ENCODE measurements at regions of chr20 and their contacts with region 1.

Region 1: DNA sequence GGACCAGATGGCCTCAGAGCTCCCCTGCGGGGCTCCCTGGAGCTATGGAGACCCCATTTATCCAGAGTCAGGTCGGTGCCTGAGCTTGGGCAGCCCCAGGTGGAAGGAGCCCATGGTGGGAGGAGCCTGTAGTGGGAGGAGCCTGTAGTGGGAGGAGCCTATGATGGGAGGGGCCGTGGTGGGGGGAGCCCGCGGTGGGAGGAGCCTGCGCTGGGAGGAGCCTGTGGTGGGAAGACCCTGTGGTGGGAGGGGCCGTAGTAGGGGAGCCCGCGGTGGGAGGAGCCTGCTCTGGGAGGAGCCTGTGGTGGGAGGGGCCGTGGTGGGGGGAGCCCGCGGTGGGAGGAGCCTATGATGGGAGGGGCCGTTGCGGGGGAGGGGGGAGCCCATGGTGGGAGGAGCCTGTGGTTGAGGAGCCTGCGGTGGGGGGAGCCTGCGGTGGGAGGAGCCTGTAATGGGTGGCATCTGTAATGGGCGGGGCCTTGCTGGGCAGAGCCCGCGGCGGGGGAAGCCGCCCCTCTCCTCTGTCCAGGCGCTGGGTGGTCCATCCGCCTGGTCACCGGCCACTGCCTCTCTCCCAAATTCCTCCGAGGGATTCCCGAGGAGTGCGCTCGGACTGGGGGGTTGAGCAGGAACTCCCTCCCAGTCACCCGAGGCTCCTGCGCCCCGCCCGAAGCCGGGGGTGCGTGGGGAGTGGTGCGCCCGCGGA is 579 bp upstream of the FNDC11 start:
- DNase-seq: peak; percentile 76 to 93 (median 87)
- ATAC-seq: peak; percentile 81
- H3K4me3 ChIP-seq: peak overlapping the region; percentile 51 to 55
- H3K4me3 Mint-ChIP-seq: peak overlapping the region; percentile 70
- H3K27ac ChIP-seq: peak overlapping the region; percentile 17 to 61
- H3K27ac Mint-ChIP-seq: peak overlapping the region; percentile 89
- H3K4me1 ChIP-seq: peaks cover 19% of the 10 kb centered on the region
- H3K4me1 Mint-ChIP-seq: peaks cover 20% of the 10 kb centered on the region
- H3K27me3 ChIP-seq: peaks cover 0 to 2% of the 10 kb centered on the region in 2 experiments
- H3K27me3 Mint-ChIP-seq: peaks cover 4% of the 10 kb centered on the region
- CTCF ChIP-seq: no peak

Region 2: GRCh38 chr20:63321136-63321831 is 232.1 kb before region 1 on chr20:
- CTCF ChIA-PET with region 1: no interaction called
- POLR2A ChIA-PET with region 1: no interaction called
- intact Hi-C with region 1: no loop called
- DNase-seq: no peak
- ATAC-seq: no peak
- H3K4me3 ChIP-seq: no peak overlapping the region
- H3K4me3 Mint-ChIP-seq: no peak overlapping the region
- H3K27ac ChIP-seq: no peak overlapping the region
- H3K27ac Mint-ChIP-seq: no peak overlapping the region
- H3K4me1 ChIP-seq: peaks cover 8% of the 10 kb centered on the region
- H3K4me1 Mint-ChIP-seq: no peaks in the 10 kb centered on the region
- H3K27me3 ChIP-seq: peaks cover 0 to 2% of the 10 kb centered on the region in 2 experiments
- H3K27me3 Mint-ChIP-seq: peaks cover 7% of the 10 kb centered on the region
- CTCF ChIP-seq: no peak

Region 3: GRCh38 chr20:63529861-63530788 is 23.3 kb before region 1 on chr20:
- CTCF ChIA-PET with region 1: no interaction called
- POLR2A ChIA-PET with region 1: no interaction called
- intact Hi-C with region 1: no loop called
- DNase-seq: peak in 3 of 9 experiments; percentile 3 to 9 (median 6)
- ATAC-seq: no peak
- H3K4me3 ChIP-seq: no peak overlapping the region
- H3K4me3 Mint-ChIP-seq: no peak overlapping the region
- H3K27ac ChIP-seq: no peak overlapping the region
- H3K27ac Mint-ChIP-seq: no peak overlapping the region
- H3K4me1 ChIP-seq: no peaks in the 10 kb centered on the region
- H3K4me1 Mint-ChIP-seq: peaks cover 3% of the 10 kb centered on the region
- H3K27me3 ChIP-seq: no peaks in the 10 kb centered on the region
- H3K27me3 Mint-ChIP-seq: no peaks in the 10 kb centered on the region
- CTCF ChIP-seq: no peak

Region 4: GRCh38 chr20:63567386-63568169 is 14.2 kb after region 1 on chr20:
- CTCF ChIA-PET with region 1: no interaction called
- POLR2A ChIA-PET with region 1: interaction called, 8 read pairs
- intact Hi-C with region 1: loop called in 1 of 2 experiments (anchors 2 kb)
- DNase-seq: peak; percentile 32 to 83 (median 62)
- ATAC-seq: peak; percentile 65
- H3K4me3 ChIP-seq: peak overlapping the region; percentile 34 to 59
- H3K4me3 Mint-ChIP-seq: peak overlapping the region; percentile 77
- H3K27ac ChIP-seq: peak overlapping the region; percentile 23 to 56
- H3K27ac Mint-ChIP-seq: peak overlapping the region; percentile 49
- H3K4me1 ChIP-seq: peaks cover 25% of the 10 kb centered on the region
- H3K4me1 Mint-ChIP-seq: peaks cover 21% of the 10 kb centered on the region
- H3K27me3 ChIP-seq: peaks cover 0 to 3% of the 10 kb centered on the region in 2 experiments
- H3K27me3 Mint-ChIP-seq: no peaks in the 10 kb centered on the region
- CTCF ChIP-seq: no peak

Region 5: DNA sequence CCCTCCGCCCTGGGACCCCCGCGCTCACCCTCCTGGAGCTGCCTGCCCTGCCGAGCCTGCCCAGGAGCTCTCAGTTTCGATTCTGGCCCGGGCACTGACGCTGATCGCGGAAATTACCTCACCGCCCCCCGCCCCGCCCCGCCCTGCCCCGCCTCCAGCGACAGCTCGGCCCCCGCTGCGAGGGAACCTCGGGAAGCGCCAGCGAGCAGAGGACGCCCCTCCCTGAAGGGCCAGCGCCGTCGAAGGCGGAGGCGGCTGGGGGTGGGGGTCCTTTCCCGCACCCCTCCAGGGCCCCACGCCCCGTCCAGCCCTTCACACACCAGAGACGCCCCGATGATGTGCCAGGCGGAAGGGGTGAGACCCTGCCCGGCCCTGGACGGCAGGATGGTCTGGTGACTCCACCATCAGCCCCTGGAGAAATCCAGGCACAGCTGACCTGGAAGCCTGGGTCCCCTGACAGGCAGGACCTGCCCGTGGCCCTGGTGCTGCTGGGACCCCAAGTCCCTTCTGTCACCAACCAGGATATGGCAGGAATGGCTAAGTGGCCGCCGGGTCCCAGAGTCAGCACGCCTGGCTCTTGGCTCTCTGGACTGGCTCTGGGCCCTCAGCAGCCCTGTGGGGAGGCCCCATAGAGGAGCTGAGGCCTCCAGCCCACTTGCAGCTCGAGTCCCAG is 20.9 kb after region 1 on chr20 and contains the start of gene HELZ2:
- CTCF ChIA-PET with region 1: no interaction called
- POLR2A ChIA-PET with region 1: interaction called, 4 read pairs
- intact Hi-C with region 1: loop called (anchors 1 to 2 kb)
- DNase-seq: peak; percentile 50 to 87 (median 69)
- ATAC-seq: peak; percentile 90
- H3K4me3 ChIP-seq: peak within 1 kb of the TSS; percentile 50 to 73
- H3K4me3 Mint-ChIP-seq: peak within 1 kb of the TSS; percentile 81
- H3K27ac ChIP-seq: peak within 1 kb of the TSS; percentile 17 to 59
- H3K27ac Mint-ChIP-seq: peak within 1 kb of the TSS; percentile 55
- H3K4me1 ChIP-seq: peaks cover 21% of the 10 kb centered on the region
- H3K4me1 Mint-ChIP-seq: peaks cover 2% of the 10 kb centered on the region
- H3K27me3 ChIP-seq: peaks cover 0 to 3% of the 10 kb centered on the region in 2 experiments
- H3K27me3 Mint-ChIP-seq: no peaks in the 10 kb centered on the region
- CTCF ChIP-seq: no peak
- total RNA-seq, gene HELZ2: 43.3 to 48.0 TPM

Region 6: DNA sequence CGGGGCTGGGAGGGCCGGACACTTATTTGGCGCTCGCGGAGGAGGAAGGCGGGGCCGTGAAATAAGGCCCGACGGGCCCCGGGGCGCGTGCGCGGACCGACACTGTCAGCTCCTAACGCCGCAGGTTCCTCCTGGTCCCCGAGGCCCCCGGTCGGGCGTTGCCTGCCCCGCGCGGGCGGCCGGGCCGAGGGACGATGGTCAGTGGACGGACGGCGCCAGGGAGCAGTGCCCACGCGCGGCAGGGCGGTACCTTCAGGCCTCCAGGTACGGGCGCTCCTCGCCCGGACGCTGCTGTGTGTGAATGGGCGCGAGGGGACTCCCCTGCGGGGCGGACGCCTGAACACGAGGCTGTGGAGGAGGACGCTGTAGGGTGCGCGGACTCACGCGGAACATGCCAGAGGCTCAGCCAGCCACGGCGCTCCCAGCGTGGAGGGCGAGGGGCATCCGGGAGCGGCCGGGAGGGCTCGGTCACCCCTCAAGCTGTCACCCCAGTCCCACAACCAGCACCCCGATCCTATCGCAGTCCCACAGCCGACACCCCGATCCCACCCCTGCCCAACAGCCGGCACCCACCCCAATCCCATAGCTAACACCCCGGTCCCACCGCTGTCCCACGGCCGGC is 73.9 kb after region 1 on chr20:
- CTCF ChIA-PET with region 1: no interaction called
- POLR2A ChIA-PET with region 1: no interaction called
- intact Hi-C with region 1: loop called (anchors 1 kb)
- DNase-seq: peak; percentile 90 to 97 (median 94)
- ATAC-seq: peak; percentile 77
- H3K4me3 ChIP-seq: peak overlapping the region; percentile 91 to 100
- H3K4me3 Mint-ChIP-seq: peak overlapping the region; percentile 97
- H3K27ac ChIP-seq: peak overlapping the region; percentile 81 to 91
- H3K27ac Mint-ChIP-seq: peak overlapping the region; percentile 93
- H3K4me1 ChIP-seq: peaks cover 39% of the 10 kb centered on the region
- H3K4me1 Mint-ChIP-seq: peaks cover 43% of the 10 kb centered on the region
- H3K27me3 ChIP-seq: no peaks in the 10 kb centered on the region
- H3K27me3 Mint-ChIP-seq: no peaks in the 10 kb centered on the region
- CTCF ChIP-seq: no peak

Region 7: DNA sequence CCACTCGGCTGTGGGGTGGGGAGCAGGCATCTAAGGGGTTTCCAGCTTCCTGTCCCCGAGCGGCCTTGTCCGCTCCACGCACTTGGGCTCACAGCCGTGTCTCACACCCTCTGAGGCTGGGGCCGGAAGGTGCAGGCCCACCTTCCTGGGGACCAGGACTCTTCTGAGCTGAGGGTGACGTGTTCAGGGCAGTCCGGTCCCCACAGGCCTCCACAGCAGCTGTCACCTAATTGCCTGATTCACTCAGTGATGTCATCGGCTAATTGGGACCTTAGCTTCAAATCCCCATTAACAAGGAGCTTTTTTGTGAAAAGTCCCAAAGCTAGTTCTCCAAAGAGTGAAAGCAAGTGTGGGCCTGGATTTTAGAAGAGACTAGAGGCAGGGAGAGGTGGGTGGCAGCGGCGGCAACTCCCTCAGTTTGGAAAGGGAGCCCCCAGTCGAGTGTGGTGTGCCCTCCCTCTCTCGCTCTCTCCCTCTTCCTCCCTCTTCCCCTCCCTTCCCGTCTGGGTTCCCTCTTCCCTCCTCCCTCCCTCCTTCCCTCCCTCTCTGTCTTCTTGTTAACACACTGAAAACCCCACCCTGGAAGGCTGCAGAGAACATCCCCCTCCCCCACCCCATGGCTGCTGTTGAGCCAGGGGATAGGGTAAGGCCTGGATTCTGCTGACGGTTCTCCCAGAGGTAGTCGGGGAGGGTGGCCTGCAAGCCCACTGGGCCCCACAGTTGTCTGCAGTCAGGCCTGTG is 649.8 kb after region 1 on chr20:
- CTCF ChIA-PET with region 1: no interaction called
- POLR2A ChIA-PET with region 1: no interaction called
- intact Hi-C with region 1: no loop called
- DNase-seq: no peak
- ATAC-seq: no peak
- H3K4me3 ChIP-seq: no peak overlapping the region
- H3K4me3 Mint-ChIP-seq: no peak overlapping the region
- H3K27ac ChIP-seq: no peak overlapping the region
- H3K27ac Mint-ChIP-seq: no peak overlapping the region
- H3K4me1 ChIP-seq: no peaks in the 10 kb centered on the region
- H3K4me1 Mint-ChIP-seq: no peaks in the 10 kb centered on the region
- H3K27me3 ChIP-seq: no peaks in the 10 kb centered on the region
- H3K27me3 Mint-ChIP-seq: peaks cover 15% of the 10 kb centered on the region
- CTCF ChIP-seq: no peak